ENCODE measurements at regions of chr10 and their contacts with region 1.

Region 1: DNA sequence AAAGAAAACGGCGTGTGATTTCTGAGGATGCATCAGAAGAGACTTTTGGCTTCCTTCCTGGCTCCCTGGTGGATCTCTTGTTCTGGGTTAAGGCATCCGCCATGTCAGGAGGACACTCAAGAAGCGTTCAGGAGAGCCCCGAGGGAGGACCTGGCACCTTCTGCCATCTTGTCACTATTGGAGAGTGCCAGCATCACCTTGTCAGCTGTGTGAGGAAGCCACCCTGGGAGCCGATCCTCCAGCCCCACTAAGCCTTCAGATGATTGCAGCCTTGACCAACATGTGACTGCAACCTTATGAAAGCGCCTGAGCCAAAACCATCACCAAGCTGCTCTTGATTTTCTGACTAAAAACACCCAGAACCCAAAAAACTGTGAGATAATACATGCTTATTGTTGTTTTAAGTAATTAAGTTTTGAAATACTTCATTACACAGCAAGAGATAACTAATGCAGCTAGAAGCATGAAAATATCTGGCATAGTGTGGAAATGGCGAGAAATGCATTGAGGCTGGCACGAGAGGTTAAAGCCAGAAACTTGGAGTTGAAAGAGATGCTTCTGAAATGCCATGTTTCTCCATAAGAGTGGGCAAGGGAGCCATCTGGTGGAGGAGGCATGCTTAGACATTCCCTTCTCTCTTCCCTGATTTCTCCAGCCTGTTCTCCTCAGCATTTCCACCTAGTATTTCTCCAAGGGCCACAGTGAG is 5.4 kb upstream of the ZFYVE27 start:
- DNase-seq: peak; percentile 53 to 72
- ATAC-seq: peak; percentile 89
- H3K4me3 ChIP-seq: no peak overlapping the region
- H3K27ac ChIP-seq: no peak overlapping the region
- H3K4me1 ChIP-seq: peaks cover 0 to 2% of the 10 kb centered on the region in 2 donors
- H3K27me3 ChIP-seq: no peaks in the 10 kb centered on the region

Region 2: GRCh38 chr10:97676770-97677581 is 54.5 kb before region 1 on chr10:
- intact Hi-C with region 1: loop called (anchors 2 kb)
- DNase-seq: no peak
- ATAC-seq: peak; percentile 72
- H3K4me3 ChIP-seq: no peak overlapping the region
- H3K27ac ChIP-seq: no peak overlapping the region
- H3K4me1 ChIP-seq: no peaks in the 10 kb centered on the region
- H3K27me3 ChIP-seq: no peaks in the 10 kb centered on the region

Region 3: DNA sequence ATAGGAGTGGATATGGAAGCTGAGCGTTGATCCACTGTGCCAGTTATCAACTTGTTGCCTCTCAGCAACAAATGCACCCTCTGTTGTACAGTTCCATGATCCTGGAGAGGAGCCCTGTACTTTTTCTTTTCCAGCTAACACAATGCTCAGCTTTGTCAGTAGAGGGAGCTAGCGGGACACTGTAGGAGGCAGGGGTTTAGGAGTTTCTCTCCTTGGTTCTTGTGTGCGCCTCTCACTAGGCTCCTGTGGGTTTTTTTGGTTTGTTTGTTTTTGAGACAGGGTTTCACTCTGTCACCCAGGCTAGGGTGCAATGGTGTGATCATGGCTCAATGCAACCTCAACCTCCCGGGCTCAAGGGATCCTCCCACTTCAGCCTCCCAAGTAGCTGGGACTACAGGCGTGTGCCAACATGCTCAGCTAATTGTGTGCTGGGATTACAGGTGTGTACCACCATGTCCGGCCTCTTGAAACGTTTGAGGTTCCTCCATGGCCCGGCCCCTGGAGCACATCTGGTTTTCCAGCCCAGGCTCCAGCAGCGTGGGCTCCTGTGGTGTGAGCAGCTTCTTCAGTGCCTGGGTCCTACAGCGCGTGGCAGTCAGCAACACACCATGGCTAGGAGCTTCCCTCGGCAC is 29.9 kb before region 1 on chr10:
- intact Hi-C with region 1: loop called (anchors 1 to 2 kb)
- DNase-seq: no peak
- ATAC-seq: peak; percentile 89
- H3K4me3 ChIP-seq: no peak overlapping the region
- H3K27ac ChIP-seq: no peak overlapping the region
- H3K4me1 ChIP-seq: peaks cover 0 to 2% of the 10 kb centered on the region in 2 donors
- H3K27me3 ChIP-seq: no peaks in the 10 kb centered on the region